Breast epithelium (tissue), 4 donors: ENCODE measurements at regions of chr4 and their contacts with region 1.

Region 1: DNA sequence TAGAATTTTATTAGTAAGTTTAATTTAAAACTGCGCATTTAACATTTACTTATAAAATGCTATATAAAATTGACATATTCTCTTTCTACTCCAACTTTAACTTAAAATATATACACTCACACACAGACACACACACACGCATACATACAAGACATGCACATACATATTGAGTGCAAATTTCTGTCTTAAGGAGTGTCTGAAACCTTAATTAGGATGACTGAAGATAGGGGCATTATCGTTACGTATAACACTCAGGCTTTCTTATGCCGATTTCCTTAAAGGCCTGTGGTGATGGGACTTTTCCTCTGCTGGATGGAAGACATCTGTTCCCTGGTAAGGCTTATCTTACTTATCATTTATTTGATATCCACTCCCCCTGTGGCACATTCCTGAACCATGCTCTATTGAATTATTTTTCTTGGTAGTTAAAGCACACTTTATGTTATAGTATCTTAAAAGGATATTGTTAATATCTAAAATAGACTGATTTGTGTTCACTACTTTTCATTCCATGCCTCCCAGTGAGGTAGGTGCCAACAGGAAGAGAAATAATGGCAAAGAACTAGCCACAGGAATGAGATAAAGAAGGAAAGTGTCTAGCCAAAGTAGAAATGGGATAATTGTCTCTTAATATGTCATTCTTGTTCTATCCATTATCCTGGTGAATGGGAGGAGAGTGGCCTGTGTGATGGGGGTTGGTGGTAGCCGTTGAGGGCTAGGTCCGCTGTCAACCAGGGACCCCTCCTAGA is 92.9 kb upstream of the GPRIN3 start:
- DNase-seq: no peak
- H3K4me3 ChIP-seq: no peak overlapping the region
- H3K27ac ChIP-seq: no peak overlapping the region
- H3K4me1 ChIP-seq: no peaks in the 10 kb centered on the region
- H3K27me3 ChIP-seq: no peaks in the 10 kb centered on the region
- CTCF ChIP-seq: no peak
- POLR2A ChIP-seq: no peak

Region 2: GRCh38 chr4:89356086-89356485 is 44.4 kb before region 1 on chr4:
- intact Hi-C with region 1: no loop called
- DNase-seq: no peak
- H3K4me3 ChIP-seq: no peak overlapping the region
- H3K27ac ChIP-seq: no peak overlapping the region
- H3K4me1 ChIP-seq: no peaks in the 10 kb centered on the region
- H3K27me3 ChIP-seq: no peaks in the 10 kb centered on the region
- CTCF ChIP-seq: no peak
- POLR2A ChIP-seq: no peak

Region 3: GRCh38 chr4:89382439-89382838 is 18.0 kb before region 1 on chr4:
- intact Hi-C with region 1: loop called (anchors 2 kb)
- DNase-seq: no peak
- H3K4me3 ChIP-seq: no peak overlapping the region
- H3K27ac ChIP-seq: peak overlapping the region; percentile 53 to 74
- H3K4me1 ChIP-seq: peaks cover 0 to 4% of the 10 kb centered on the region in 2 donors
- H3K27me3 ChIP-seq: no peaks in the 10 kb centered on the region
- CTCF ChIP-seq: no peak
- POLR2A ChIP-seq: no peak